ENCODE measurements at regions of chr7 and their contacts with region 1.

Region 1: GRCh38 chr7:55641273-55641691 is 69.0 kb upstream of the VOPP1 start:
- DNase-seq: peak; percentile 5 to 30
- ATAC-seq: peak; percentile 91 to 96
- H3K4me3 ChIP-seq: no peak overlapping the region
- H3K27ac ChIP-seq: no peak overlapping the region
- H3K4me1 ChIP-seq: no peaks in the 10 kb centered on the region
- H3K27me3 ChIP-seq: no peaks in the 10 kb centered on the region
- CTCF ChIP-seq: peak; percentile 63 to 90 (median 77)
- POLR2A ChIP-seq: no peak

Region 2: GRCh38 chr7:54985405-54986330 is 655.6 kb before region 1 on chr7:
- in situ Hi-C with region 1: no loop called
- intact Hi-C with region 1: no loop called
- DNase-seq: no peak
- ATAC-seq: no peak
- H3K4me3 ChIP-seq: no peak overlapping the region
- H3K27ac ChIP-seq: no peak overlapping the region
- H3K4me1 ChIP-seq: no peaks in the 10 kb centered on the region
- H3K27me3 ChIP-seq: no peaks in the 10 kb centered on the region
- CTCF ChIP-seq: no peak
- POLR2A ChIP-seq: no peak

Region 3: DNA sequence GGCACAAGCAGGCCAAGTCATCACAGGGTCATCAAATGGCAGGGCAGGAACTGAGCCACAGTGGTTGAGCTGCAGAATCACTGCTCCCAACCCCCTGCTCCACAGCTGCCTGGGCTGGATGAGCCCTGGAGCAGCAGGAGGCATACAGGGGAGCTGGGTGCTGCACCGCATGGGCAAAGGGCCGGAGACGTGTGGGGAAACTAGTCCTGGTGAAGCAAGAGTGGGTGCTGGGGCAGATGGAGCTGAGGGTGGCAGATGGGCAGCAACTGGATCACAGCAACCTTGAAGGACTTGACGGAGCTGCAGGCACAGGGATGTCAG is 52.9 kb before region 1 on chr7:
- in situ Hi-C with region 1: no loop called
- intact Hi-C with region 1: no loop called
- DNase-seq: no peak
- ATAC-seq: no peak
- H3K4me3 ChIP-seq: no peak overlapping the region
- H3K27ac ChIP-seq: no peak overlapping the region
- H3K4me1 ChIP-seq: peaks cover 5 to 8% of the 10 kb centered on the region in 2 donors
- H3K27me3 ChIP-seq: no peaks in the 10 kb centered on the region
- CTCF ChIP-seq: no peak
- POLR2A ChIP-seq: no peak

Region 4: DNA sequence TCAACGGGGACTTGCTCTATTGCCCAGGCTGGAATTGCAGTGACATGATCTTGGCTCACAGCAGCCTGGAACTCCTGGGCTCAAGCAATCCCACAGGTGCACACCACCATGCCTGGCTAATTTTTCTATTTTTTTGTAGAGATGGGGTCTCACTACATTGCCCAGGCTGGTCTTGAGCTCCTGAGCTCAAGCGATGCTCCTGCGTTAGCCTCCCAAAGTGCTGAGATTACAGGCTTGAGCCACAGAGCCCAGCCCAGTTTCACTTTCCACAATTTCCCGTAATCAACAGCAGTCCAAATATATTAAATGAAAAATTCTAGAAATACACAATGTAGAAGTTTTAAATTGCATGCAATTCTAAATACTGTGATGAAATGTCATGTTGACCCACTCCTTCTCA is 197.3 kb after region 1 on chr7:
- in situ Hi-C with region 1: no loop called
- intact Hi-C with region 1: no loop called
- DNase-seq: no peak
- ATAC-seq: no peak
- H3K4me3 ChIP-seq: no peak overlapping the region
- H3K27ac ChIP-seq: no peak overlapping the region
- H3K4me1 ChIP-seq: no peaks in the 10 kb centered on the region
- H3K27me3 ChIP-seq: no peaks in the 10 kb centered on the region
- CTCF ChIP-seq: no peak
- POLR2A ChIP-seq: no peak

Region 5: DNA sequence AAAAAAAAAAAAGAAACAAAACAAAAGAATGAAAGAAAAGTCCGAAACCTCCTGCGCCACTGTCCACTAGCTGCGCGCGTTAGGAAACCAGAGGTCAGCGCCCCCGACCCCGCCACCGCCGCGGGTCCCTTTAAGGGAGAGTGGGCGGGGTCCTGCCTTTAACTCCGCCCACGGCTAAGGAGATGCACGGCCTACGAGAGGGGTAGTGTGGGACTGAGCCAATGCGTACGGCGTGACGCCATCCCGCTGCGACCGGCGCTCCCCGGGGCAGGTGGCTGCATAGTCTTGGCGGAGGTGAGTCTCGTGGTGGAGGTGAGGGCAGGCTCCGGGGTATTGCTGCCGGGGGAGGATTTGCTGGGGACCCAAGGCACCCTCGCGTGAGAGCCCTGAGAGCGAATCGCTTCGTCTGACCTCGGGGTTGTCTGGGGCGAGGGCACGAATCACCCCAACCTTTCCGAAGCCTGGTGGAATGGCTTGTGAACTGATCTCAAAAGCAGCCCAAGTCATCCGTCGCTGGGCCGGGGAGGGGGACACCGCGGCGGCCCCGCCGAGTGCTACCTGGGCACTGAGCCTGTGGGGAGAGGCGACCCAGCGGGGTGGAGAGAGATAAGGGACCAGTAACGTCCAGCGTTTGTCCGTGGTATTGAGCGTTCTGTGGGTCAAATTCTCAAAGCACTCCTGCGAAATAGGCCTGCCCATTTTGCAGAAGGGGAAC is 310.5 kb after region 1 on chr7 and contains the start of gene MRPS17:
- in situ Hi-C with region 1: loop called in 1 of 4 experiments (anchors 25 kb)
- intact Hi-C with region 1: no loop called
- DNase-seq: peak; percentile 82 to 91
- ATAC-seq: peak; percentile 98 to 99
- H3K4me3 ChIP-seq: peak within 1 kb of the TSS; percentile 78 to 99 (median 82)
- H3K27ac ChIP-seq: peak within 1 kb of the TSS; percentile 86 to 90 (median 88)
- H3K4me1 ChIP-seq: peaks cover 9 to 12% of the 10 kb centered on the region in 2 donors
- H3K27me3 ChIP-seq: no peaks in the 10 kb centered on the region
- CTCF ChIP-seq: peak in 1 of 5 experiments; percentile 36
- POLR2A ChIP-seq: peak; percentile 74 to 76
- total RNA-seq, gene MRPS17: 14.0 to 38.3 (median 22.0) TPM

Region 6: DNA sequence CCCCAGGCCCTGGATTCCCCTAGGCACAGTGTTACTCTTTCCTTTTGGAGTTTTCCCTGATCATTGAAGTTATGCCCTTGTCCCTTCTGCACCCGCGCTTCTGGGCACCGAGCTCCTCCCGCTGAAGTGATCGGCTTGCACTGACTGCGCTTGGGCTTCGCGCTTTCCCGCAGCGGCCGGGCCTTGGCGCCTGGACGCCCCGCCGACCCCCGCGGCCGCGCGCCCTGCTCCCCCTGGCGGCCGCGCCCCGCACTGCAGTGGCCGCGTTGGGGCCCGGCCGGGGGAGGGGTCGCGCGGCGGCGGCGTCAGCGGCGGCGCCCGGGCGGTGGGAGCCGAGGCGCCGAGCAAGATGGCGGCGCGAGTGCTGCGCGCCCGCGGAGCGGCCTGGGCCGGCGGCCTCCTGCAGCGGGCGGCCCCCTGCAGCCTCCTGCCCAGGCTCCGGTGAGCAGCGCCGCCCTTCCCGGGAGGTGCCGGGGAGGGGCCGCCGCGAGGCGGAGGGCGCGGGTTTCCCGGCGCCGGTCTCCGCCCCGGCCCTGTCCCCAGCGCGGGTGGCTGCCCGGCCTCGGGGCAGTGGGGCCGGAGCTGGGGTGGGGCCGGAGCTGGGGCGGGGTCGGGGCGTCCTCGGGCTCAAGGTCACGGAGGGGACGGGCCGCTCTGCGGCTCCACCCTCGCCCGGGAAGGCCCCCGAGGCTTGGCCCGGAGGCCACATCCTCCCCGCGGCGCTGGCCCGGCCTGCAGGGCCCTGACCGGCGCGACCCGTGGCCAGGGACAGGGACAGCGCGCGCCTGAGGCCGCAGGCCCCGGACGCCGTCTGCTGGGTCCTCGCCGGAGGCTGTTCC is 323.2 kb after region 1 on chr7 and contains the start of gene NIPSNAP2:
- in situ Hi-C with region 1: loop called in 1 of 4 experiments (anchors 25 kb)
- intact Hi-C with region 1: loop called (anchors 1 kb)
- DNase-seq: peak; percentile 67 to 83
- ATAC-seq: peak; percentile 58 to 72
- H3K4me3 ChIP-seq: peak within 1 kb of the TSS; percentile 68 to 71 (median 70)
- H3K27ac ChIP-seq: peak within 1 kb of the TSS; percentile 96 to 98 (median 97)
- H3K4me1 ChIP-seq: peaks cover 42 to 47% of the 10 kb centered on the region in 2 donors
- H3K27me3 ChIP-seq: no peaks in the 10 kb centered on the region
- CTCF ChIP-seq: peak; percentile 36 to 96 (median 86)
- POLR2A ChIP-seq: peak; percentile 79 to 91
- total RNA-seq, gene NIPSNAP2: 234 to 382 (median 354) TPM

Region 7: GRCh38 chr7:56009695-56010094 is 368.4 kb after region 1 on chr7:
- in situ Hi-C with region 1: no loop called
- intact Hi-C with region 1: no loop called
- DNase-seq: peak in 1 of 2 donors; percentile 50
- ATAC-seq: peak in 1 of 2 donors; percentile 63
- H3K4me3 ChIP-seq: no peak overlapping the region
- H3K27ac ChIP-seq: no peak overlapping the region
- H3K4me1 ChIP-seq: no peaks in the 10 kb centered on the region
- H3K27me3 ChIP-seq: no peaks in the 10 kb centered on the region
- CTCF ChIP-seq: no peak
- POLR2A ChIP-seq: no peak

Region 8: GRCh38 chr7:56074371-56074791 is 433.1 kb after region 1 on chr7:
- in situ Hi-C with region 1: loop called in 2 of 4 experiments (anchors 10 to 25 kb)
- intact Hi-C with region 1: loop called (anchors 5 kb)
- DNase-seq: peak; percentile 70 to 89
- ATAC-seq: peak; percentile 81 to 84
- H3K4me3 ChIP-seq: no peak overlapping the region
- H3K27ac ChIP-seq: peak overlapping the region; percentile 20 to 56 (median 44)
- H3K4me1 ChIP-seq: peaks cover 11 to 23% of the 10 kb centered on the region in 2 donors
- H3K27me3 ChIP-seq: no peaks in the 10 kb centered on the region
- CTCF ChIP-seq: peak; percentile 79 to 95 (median 93)
- POLR2A ChIP-seq: no peak

Region 9: GRCh38 chr7:56092789-56093531 is 451.7 kb after region 1 on chr7 and contains the start of gene PHKG1:
- in situ Hi-C with region 1: loop called in 1 of 4 experiments (anchors 25 kb)
- intact Hi-C with region 1: no loop called
- DNase-seq: peak; percentile 84 to 93
- ATAC-seq: peak; percentile 76 to 78
- H3K4me3 ChIP-seq: peak within 1 kb of the TSS; percentile 52 to 64 (median 58)
- H3K27ac ChIP-seq: peak within 1 kb of the TSS; percentile 94 to 99 (median 95)
- H3K4me1 ChIP-seq: peaks cover 48 to 51% of the 10 kb centered on the region in 2 donors
- H3K27me3 ChIP-seq: no peaks in the 10 kb centered on the region
- CTCF ChIP-seq: peak in 4 of 5 experiments; percentile 46 to 82 (median 62)
- POLR2A ChIP-seq: peak; percentile 59 to 84
- total RNA-seq, gene PHKG1: 30.1 to 211 (median 57.2) TPM